Endothelial cell of umbilical vein (primary cell): ENCODE measurements at regions of chr18 and their contacts with region 1.

Region 1: DNA sequence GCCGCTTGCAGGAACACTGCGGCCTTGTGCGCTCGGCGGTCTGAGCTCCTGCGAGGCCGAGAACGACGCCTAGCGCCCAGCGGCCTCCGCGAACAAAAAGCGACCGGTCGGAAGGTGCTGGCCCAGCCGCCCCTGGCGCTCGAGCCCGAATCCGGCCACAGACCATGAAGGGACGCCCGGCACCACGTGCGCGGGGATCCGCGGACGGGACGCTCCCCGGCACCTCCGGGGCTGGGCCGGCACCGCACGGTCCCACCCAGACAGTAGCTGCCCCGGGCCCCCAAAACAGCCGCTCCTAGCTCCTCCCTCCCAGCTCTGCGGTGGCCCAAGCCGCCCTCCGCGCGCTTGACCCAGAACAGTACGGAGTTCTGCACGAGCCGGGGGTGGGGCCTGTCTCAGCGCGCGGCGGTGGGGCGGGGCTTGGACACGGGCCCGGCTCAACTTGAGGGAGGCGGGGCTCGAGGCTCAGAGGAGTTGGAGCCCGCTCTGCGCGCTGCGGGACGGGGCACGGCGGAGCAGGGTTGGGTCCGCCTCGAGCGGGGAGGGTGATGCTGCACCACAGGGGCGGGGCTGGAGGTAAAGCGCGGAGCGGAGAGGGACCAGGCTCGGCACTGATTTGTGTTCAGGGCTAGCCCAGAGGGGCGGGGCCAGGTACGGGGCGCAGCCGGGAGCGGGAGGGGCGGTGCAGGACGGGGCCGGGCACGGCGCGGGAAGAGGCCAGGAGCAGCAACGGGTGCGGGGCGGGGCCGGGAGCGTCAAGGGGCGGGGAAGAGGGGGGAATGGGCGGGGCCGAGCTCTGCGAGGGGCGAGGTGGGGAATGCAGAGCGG is 538 bp upstream of the IMPA2 start:
- DNase-seq: peak; percentile 98
- H3K4me3 ChIP-seq: peak overlapping the region; percentile 43 to 86 (median 72)
- H3K27ac ChIP-seq: peak overlapping the region; percentile 71
- H3K4me1 ChIP-seq: peaks cover 12% of the 10 kb centered on the region
- H3K27me3 ChIP-seq: peaks cover 3 to 4% of the 10 kb centered on the region in 2 experiments
- CTCF ChIP-seq: peak in 1 of 2 donors; percentile 19
- POLR2A ChIP-seq: peak; percentile 61

Region 2: DNA sequence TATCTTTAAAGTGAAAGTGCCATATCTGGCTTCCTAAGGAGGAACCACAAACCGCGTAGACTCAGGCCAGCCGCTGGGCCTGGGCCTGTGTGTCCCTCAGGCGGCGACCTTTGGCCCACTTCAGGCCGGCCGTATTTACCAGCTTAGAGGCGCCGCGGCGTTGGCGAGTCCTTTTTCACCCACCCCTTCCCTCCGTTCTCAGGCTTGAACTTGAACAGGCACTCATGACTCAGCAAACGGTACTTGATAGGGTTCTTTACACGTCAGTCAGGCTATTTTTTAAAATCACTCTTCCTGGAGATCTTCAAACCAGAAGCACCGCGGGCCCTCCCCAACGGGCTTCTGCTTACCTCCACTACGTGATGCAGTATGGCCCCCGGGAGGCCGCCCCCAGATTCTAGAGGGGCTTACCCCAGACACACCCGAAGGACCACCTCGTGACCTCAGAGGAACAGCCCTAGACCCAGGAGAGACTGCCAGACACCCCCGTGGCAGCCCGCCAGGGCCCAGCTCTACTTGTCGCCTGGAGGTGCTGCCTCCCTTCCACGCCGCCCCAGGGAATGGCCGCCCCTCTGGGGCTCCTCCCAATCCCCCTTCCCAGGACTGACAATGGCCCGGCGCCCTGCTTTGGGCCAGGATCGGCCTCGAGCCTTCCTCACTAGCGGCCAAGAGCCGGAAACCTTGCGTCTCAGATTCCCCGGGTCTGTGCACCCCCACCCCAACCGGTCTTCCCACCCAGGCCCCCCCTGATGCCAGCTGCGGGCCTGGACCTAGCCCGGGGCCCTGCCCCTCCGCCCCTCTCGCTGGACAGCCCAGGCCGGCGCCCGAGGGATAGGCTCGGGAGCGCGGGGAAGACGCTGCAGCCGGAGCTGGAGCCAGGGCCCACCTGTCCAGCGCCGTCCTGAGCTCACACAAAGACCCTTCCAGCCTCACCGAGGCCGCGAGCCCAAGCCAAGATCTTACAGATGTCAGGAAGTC is 33.3 kb before region 1 on chr18:
- CTCF ChIA-PET with region 1: interaction called, 9 read pairs
- POLR2A ChIA-PET with region 1: interaction called, 8 read pairs
- dilution Hi-C with region 1: no loop called
- intact Hi-C with region 1: loop called (anchors 1 kb)
- DNase-seq: peak; percentile 97
- H3K4me3 ChIP-seq: peak overlapping the region; percentile 43 to 60 (median 57)
- H3K27ac ChIP-seq: peak overlapping the region; percentile 95
- H3K4me1 ChIP-seq: peaks cover 11% of the 10 kb centered on the region
- H3K27me3 ChIP-seq: no peaks in the 10 kb centered on the region
- CTCF ChIP-seq: no peak
- POLR2A ChIP-seq: peak; percentile 27

Region 3: GRCh38 chr18:11955239-11956029 is 25.3 kb before region 1 on chr18:
- CTCF ChIA-PET with region 1: interaction called, 3 read pairs
- POLR2A ChIA-PET with region 1: no interaction called
- dilution Hi-C with region 1: no loop called
- intact Hi-C with region 1: loop called (anchors 2 kb)
- DNase-seq: peak; percentile 87
- H3K4me3 ChIP-seq: no peak overlapping the region
- H3K27ac ChIP-seq: peak overlapping the region; percentile 57
- H3K4me1 ChIP-seq: peaks cover 4% of the 10 kb centered on the region
- H3K27me3 ChIP-seq: no peaks in the 10 kb centered on the region
- CTCF ChIP-seq: no peak
- POLR2A ChIP-seq: no peak

Region 4: DNA sequence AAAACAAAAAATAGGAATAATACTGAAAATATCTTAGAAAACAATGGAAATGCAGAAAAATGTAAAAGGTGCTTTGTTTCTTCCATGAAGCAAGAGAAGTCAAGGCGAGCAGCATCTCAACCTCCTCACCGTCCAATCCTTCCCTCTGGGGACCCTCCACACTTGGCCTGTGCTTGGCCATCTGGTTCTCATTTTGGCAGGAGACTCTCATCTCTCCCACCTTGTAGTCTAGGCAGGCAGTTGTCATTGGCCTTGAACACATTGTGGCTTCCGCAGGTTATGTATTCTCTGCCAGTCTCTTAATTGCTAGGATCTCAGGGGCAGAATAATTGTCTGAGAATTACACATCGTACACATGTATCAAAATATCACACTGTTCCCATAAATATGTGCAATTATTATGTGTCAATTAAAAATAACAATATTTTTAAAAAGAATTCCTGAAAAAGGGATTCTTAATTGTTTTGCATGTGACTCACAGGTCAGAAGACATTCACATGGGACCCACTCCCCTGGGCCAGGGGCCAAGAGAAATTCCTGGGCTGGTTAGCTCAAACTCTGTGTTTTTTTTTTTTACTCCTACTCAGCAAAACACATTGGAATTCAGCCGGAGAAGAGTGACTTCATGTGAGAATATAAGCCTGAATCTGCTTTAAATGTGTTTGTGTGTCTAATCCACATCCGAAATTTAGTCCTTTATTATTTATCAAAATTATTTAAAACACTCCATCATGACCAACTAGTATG is 98.9 kb after region 1 on chr18:
- CTCF ChIA-PET with region 1: no interaction called
- POLR2A ChIA-PET with region 1: no interaction called
- dilution Hi-C with region 1: no loop called
- intact Hi-C with region 1: no loop called
- DNase-seq: peak; percentile 91
- H3K4me3 ChIP-seq: no peak overlapping the region
- H3K27ac ChIP-seq: peak overlapping the region; percentile 55
- H3K4me1 ChIP-seq: peaks cover 11% of the 10 kb centered on the region
- H3K27me3 ChIP-seq: no peaks in the 10 kb centered on the region
- CTCF ChIP-seq: no peak
- POLR2A ChIP-seq: no peak